Right ventricle myocardium superior (tissue), 1 donor: ENCODE measurements at regions of chr10 and their contacts with region 1.

Region 1: GRCh38 chr10:116296291-116296721 is 23.3 kb upstream of the GFRA1 start:
- DNase-seq: no peak
- ATAC-seq: no peak

Region 2: GRCh38 chr10:115790220-115790619 is 506.1 kb before region 1 on chr10:
- intact Hi-C with region 1: loop called (anchors 10 kb)
- DNase-seq: no peak
- ATAC-seq: no peak

Region 3: DNA sequence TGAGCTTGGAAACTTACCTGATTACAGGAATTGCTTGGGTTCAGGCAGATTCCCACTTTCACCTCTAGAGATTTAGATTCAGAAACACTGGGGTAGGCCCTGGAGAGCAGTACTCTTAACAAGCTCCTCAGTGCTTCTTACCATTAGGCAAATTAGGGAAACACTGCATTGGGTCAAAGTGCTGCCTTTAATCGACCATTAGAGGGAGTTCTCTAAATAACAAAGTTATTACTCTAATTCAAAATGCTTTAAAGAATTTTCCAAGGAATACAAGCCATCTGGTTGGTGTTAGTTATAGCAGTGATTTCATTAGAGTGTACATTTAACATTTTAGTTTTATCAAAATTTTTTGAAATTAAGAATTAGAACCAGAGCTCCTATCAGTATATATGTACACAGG is 347.8 kb before region 1 on chr10:
- intact Hi-C with region 1: loop called (anchors 5 kb)
- DNase-seq: no peak
- ATAC-seq: peak; percentile 68